ENCODE measurements at regions of chr10 and their contacts with region 1.

Region 1: GRCh38 chr10:24929056-24929544 is 23.3 kb downstream of the PRTFDC1 start:
- DNase-seq: peak; percentile 79
- ATAC-seq: peak; percentile 88
- H3K4me3 ChIP-seq: no peak overlapping the region
- H3K27ac ChIP-seq: no peak overlapping the region
- H3K4me1 ChIP-seq: peaks cover 6% of the 10 kb centered on the region
- H3K27me3 ChIP-seq: no peaks in the 10 kb centered on the region
- CTCF ChIP-seq: no peak
- EP300 ChIP-seq: peak; percentile 55 to 66; a peak in 1 of 4 replicates
- POLR2A ChIP-seq: no peak
- RAD21 ChIP-seq: no peak

Region 2: GRCh38 chr10:24642622-24643417 is 286.3 kb before region 1 on chr10:
- CTCF ChIA-PET with region 1: interaction called, 13 read pairs
- POLR2A ChIA-PET with region 1: interaction called, 5 read pairs
- RAD21 ChIA-PET with region 1: interaction called, 20 read pairs
- SMC1A ChIA-PET with region 1: interaction called, 23 read pairs
- in situ Hi-C with region 1: no loop called
- intact Hi-C with region 1: no loop called
- DNase-seq: peak; percentile 40
- ATAC-seq: peak; percentile 86
- H3K4me3 ChIP-seq: no peak overlapping the region
- H3K27ac ChIP-seq: no peak overlapping the region
- H3K4me1 ChIP-seq: peaks cover 14% of the 10 kb centered on the region
- H3K27me3 ChIP-seq: no peaks in the 10 kb centered on the region
- CTCF ChIP-seq: peak; percentile 74 to 85 (median 83)
- EP300 ChIP-seq: no peak
- POLR2A ChIP-seq: no peak
- RAD21 ChIP-seq: peak; percentile 96

Region 3: DNA sequence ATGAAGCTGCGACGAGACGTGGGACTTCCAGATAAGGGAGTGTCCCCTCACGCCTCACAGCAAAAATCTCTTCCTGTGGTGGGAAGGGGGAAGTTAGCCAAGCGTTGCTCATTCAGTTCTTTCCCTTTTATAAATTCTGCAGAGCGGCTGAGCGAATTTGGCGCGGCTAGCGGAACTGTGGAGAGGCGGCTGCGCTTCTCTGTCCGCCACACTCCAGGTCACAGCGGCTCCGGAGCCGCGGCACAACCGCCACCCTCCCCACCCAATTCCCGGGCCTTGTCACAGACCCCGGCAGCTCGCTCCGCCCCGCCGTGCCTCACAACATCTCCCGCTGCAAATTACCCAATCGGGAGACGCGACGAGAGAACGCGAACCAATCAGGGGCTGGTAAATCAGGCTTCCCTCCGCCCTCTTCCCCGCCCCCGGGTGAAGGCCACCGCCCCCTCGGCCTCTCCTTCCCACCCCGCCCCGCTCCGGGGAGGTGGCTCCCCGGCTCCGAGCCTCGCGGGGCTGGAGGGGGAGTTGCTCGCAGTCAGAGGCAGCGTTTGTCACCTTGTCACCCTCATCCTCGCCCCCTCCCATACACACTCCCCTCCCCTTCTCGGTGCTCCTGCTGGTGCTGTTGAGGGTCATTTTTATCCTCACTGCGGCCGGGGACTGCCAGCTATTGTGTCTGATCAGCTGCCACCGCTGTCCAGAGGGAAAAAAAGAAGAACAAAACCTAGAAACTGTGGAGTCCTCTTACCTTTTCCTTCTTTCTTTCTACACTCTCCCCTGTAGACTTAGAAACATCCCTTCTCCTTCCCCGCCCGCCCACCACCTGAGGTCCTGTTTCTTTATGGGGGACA is 204.5 kb before region 1 on chr10:
- CTCF ChIA-PET with region 1: interaction called, 8 read pairs
- POLR2A ChIA-PET with region 1: interaction called, 16 read pairs
- RAD21 ChIA-PET with region 1: interaction called, 28 read pairs
- SMC1A ChIA-PET with region 1: interaction called, 63 read pairs
- in situ Hi-C with region 1: no loop called
- intact Hi-C with region 1: loop called (anchors 5 kb)
- DNase-seq: peak; percentile 90
- ATAC-seq: peak; percentile 87
- H3K4me3 ChIP-seq: peak overlapping the region; percentile 88
- H3K27ac ChIP-seq: peak overlapping the region; percentile 51
- H3K4me1 ChIP-seq: peaks cover 6% of the 10 kb centered on the region; the same call in 1 of the 2 replicates
- H3K27me3 ChIP-seq: no peaks in the 10 kb centered on the region
- CTCF ChIP-seq: no peak
- EP300 ChIP-seq: no peak
- POLR2A ChIP-seq: peak; percentile 89
- RAD21 ChIP-seq: peak; percentile 4; the same call in 1 of the 2 replicates

Region 4: GRCh38 chr10:24887855-24888231 is 41.3 kb before region 1 on chr10:
- CTCF ChIA-PET with region 1: interaction called, 3 read pairs
- POLR2A ChIA-PET with region 1: interaction called, 7 read pairs
- RAD21 ChIA-PET with region 1: interaction called, 23 read pairs
- SMC1A ChIA-PET with region 1: interaction called, 33 read pairs
- in situ Hi-C with region 1: no loop called
- intact Hi-C with region 1: loop called (anchors 5 kb)
- DNase-seq: no peak
- ATAC-seq: peak; percentile 22
- H3K4me3 ChIP-seq: no peak overlapping the region
- H3K27ac ChIP-seq: peak overlapping the region; percentile 16
- H3K4me1 ChIP-seq: peaks cover 3% of the 10 kb centered on the region; the same call in 1 of the 2 replicates
- H3K27me3 ChIP-seq: no peaks in the 10 kb centered on the region
- CTCF ChIP-seq: no peak
- EP300 ChIP-seq: no peak; a peak in 1 of 4 replicates
- POLR2A ChIP-seq: no peak
- RAD21 ChIP-seq: no peak

Region 5: GRCh38 chr10:24908793-24909423 is 20.2 kb before region 1 on chr10:
- CTCF ChIA-PET with region 1: interaction called, 52 read pairs
- POLR2A ChIA-PET with region 1: interaction called, 22 read pairs
- RAD21 ChIA-PET with region 1: interaction called, 193 read pairs
- SMC1A ChIA-PET with region 1: interaction called, 338 read pairs
- in situ Hi-C with region 1: no loop called
- intact Hi-C with region 1: no loop called
- DNase-seq: no peak
- ATAC-seq: peak; percentile 65
- H3K4me3 ChIP-seq: no peak overlapping the region
- H3K27ac ChIP-seq: no peak overlapping the region
- H3K4me1 ChIP-seq: no peaks in the 10 kb centered on the region
- H3K27me3 ChIP-seq: no peaks in the 10 kb centered on the region
- CTCF ChIP-seq: no peak
- EP300 ChIP-seq: no peak
- POLR2A ChIP-seq: no peak
- RAD21 ChIP-seq: no peak

Region 6: DNA sequence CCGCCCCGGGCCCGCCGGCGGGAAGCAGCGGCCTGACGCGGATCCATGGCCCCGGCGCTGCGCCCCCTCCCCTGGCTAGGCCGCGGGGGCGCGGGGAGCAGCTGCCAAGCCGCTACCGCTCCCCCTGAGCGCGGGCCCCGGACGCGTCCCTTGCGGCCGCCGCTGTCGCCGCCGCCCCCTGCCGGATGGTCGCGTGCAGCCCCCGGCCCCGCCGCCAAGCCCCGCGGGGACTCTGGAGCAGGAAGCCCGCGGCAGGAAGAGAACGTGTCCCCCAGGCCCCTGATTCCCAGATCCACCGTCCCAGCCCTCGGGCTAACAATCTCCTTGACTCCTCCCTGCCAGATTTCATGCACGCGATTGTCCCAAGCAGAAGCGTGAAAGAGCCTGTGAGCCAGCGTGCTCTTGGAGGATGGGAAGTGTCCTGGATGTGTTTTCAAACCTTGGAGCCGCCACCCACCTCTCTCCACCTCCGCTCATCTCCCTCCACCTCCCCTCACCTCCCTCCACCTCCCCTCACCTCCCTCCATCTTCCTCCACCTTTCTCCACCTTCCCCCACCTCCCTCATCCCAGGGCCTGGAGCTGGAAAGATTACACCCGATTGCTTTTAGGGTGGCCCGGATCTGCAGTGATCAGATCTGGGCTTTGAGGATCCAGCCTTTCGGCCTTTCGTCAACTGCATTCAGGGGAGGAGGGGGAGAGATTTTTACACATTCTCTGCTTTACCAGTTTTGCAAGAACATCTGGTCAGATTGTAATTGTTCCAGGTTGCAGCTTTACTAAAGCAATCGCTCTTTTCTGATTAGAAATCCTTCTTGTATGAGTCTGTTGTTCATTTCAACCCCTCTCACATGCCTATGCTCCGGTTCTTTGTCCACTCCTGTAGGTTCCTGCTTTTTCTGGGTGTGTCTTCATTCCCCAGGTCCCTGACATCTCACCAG is 23.9 kb after region 1 on chr10:
- CTCF ChIA-PET with region 1: interaction called, 56 read pairs
- POLR2A ChIA-PET with region 1: interaction called, 103 read pairs
- RAD21 ChIA-PET with region 1: interaction called, 274 read pairs
- SMC1A ChIA-PET with region 1: interaction called, 236 read pairs
- in situ Hi-C with region 1: no loop called
- intact Hi-C with region 1: loop called (anchors 1 kb)
- DNase-seq: no peak
- ATAC-seq: peak; percentile 72
- H3K4me3 ChIP-seq: peak overlapping the region; percentile 66; the same call in 1 of the 2 replicates
- H3K27ac ChIP-seq: no peak overlapping the region
- H3K4me1 ChIP-seq: peaks cover under 1% of the 10 kb centered on the region; the same call in 1 of the 2 replicates
- H3K27me3 ChIP-seq: no peaks in the 10 kb centered on the region
- CTCF ChIP-seq: peak; percentile 20 to 53 (median 24); a peak in 4 of 6 replicates
- EP300 ChIP-seq: no peak
- POLR2A ChIP-seq: peak; percentile 51
- RAD21 ChIP-seq: peak; percentile 49

Region 7: GRCh38 chr10:24989867-24990266 is 60.8 kb after region 1 on chr10:
- CTCF ChIA-PET with region 1: interaction called, 14 read pairs
- POLR2A ChIA-PET with region 1: interaction called, 6 read pairs
- RAD21 ChIA-PET with region 1: interaction called, 30 read pairs
- SMC1A ChIA-PET with region 1: interaction called, 44 read pairs
- in situ Hi-C with region 1: no loop called
- intact Hi-C with region 1: no loop called
- DNase-seq: no peak
- ATAC-seq: no peak
- H3K4me3 ChIP-seq: no peak overlapping the region
- H3K27ac ChIP-seq: no peak overlapping the region
- H3K4me1 ChIP-seq: no peaks in the 10 kb centered on the region
- H3K27me3 ChIP-seq: no peaks in the 10 kb centered on the region
- CTCF ChIP-seq: no peak; a peak in 1 of 6 replicates
- EP300 ChIP-seq: no peak
- POLR2A ChIP-seq: no peak
- RAD21 ChIP-seq: peak; percentile 8; the same call in 1 of the 2 replicates

Region 8: DNA sequence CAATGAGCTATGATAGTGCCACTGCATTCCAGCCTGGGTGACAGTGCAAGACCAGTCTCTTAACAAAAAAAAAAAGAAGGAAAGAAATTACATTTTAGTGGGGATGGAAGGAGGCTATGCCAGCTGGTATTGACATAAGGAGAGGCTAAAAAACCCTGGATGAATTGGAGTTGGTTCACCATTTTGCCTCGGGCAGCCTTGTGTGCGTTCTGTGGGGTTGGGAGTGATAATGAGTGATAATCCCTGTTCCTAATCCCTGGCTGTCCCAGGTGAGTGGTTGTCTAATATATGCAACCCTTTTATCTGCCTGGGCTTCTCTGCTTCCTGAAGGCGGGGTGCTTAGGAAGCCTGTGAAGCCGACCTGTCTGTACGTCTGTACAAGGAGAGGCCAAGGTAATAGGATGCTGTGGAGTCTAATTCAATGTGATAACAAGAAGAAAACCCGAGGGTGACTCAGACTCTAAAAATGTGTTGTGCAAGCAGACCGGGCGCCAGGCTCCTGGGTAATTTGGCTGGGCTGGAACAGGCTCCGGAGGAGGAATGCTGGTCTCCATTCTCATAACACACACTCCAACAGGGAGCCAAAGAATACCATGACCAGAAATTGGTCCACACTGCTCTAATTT is 130.8 kb after region 1 on chr10:
- CTCF ChIA-PET with region 1: no interaction called
- POLR2A ChIA-PET with region 1: no interaction called
- RAD21 ChIA-PET with region 1: no interaction called
- SMC1A ChIA-PET with region 1: no interaction called
- in situ Hi-C with region 1: no loop called
- intact Hi-C with region 1: no loop called
- DNase-seq: no peak
- ATAC-seq: no peak
- H3K4me3 ChIP-seq: no peak overlapping the region
- H3K27ac ChIP-seq: no peak overlapping the region
- H3K4me1 ChIP-seq: no peaks in the 10 kb centered on the region
- H3K27me3 ChIP-seq: no peaks in the 10 kb centered on the region
- CTCF ChIP-seq: no peak
- EP300 ChIP-seq: no peak
- POLR2A ChIP-seq: no peak
- RAD21 ChIP-seq: no peak